Activated CD4-positive, alpha-beta memory T cell treated with anti-CD3 and anti-CD28 coated beads, Interleukin-2, amount 10 ng/mL, durations not matched to agents 7 days and 5 days (primary cell): ENCODE measurements at regions of chr1 and their contacts with region 1.

Region 1: GRCh38 chr1:200877839-200878551 is 5.2 kb downstream of the GPR25 start:
- DNase-seq: peak; percentile 68
- H3K4me3 Mint-ChIP-seq: no peak overlapping the region
- H3K27ac Mint-ChIP-seq: no peak overlapping the region
- H3K4me1 Mint-ChIP-seq: peaks cover 30% of the 10 kb centered on the region
- H3K27me3 Mint-ChIP-seq: peaks cover 47% of the 10 kb centered on the region

Region 2: DNA sequence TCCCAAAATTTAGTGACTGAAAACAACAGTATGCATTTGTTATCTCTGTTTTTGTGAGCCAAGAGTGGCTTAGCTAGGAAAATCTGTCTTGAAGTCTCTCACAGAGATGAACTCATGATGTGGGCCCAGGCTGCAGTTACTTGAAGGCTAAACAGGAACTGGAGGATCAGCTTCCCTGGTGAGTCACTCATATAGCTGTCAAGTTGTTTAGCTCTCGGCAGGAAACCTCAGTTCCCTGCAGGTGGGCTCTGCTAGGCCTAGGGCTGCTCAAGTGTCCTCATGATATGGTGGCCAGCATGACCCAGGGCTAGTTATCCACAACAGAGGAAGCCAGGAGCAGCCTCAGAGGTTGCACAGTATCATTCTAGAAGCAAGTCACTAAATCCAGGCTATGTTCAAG is 178.1 kb before region 1 on chr1:
- CTCF ChIA-PET with region 1: no interaction called
- POLR2A ChIA-PET with region 1: no interaction called
- DNase-seq: no peak
- H3K4me3 Mint-ChIP-seq: no peak overlapping the region
- H3K27ac Mint-ChIP-seq: no peak overlapping the region
- H3K4me1 Mint-ChIP-seq: peaks cover 5% of the 10 kb centered on the region
- H3K27me3 Mint-ChIP-seq: peaks cover 10% of the 10 kb centered on the region

Region 3: GRCh38 chr1:200905411-200906052 is 27.5 kb after region 1 on chr1:
- CTCF ChIA-PET with region 1: no interaction called
- POLR2A ChIA-PET with region 1: interaction called, 10 read pairs
- DNase-seq: peak; percentile 41
- H3K4me3 Mint-ChIP-seq: no peak overlapping the region
- H3K27ac Mint-ChIP-seq: no peak overlapping the region
- H3K4me1 Mint-ChIP-seq: peaks cover 9% of the 10 kb centered on the region
- H3K27me3 Mint-ChIP-seq: peaks cover 57% of the 10 kb centered on the region